ENCODE measurements at regions of chr7 and their contacts with region 1.

Region 1: DNA sequence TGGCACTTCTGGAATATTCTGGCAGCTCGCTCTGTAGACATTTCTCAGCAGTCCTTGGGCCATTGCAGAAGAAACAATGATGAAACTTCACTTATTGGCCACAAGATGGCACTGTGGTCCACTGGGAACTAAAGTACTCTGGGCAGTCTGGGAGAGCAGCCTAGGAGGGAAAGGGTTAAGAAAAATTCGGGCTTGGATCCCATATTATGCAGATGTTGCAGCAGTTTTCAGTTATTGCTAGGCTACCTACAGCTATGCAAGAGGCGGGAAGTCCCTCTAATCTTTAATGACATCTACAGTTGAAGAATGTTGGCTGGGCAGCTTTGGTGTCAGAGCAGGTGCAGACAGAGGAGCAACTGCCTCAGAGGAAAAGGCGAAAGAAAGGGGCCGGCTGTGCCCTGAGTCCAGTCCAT is 201.7 kb upstream of the PRSS58 start:
- DNase-seq: peak; percentile 59
- H3K4me3 Mint-ChIP-seq: peak overlapping the region; percentile 16
- H3K27ac Mint-ChIP-seq: peak overlapping the region; percentile 9
- H3K4me1 Mint-ChIP-seq: peaks cover 71% of the 10 kb centered on the region
- H3K27me3 Mint-ChIP-seq: no peaks in the 10 kb centered on the region

Region 2: DNA sequence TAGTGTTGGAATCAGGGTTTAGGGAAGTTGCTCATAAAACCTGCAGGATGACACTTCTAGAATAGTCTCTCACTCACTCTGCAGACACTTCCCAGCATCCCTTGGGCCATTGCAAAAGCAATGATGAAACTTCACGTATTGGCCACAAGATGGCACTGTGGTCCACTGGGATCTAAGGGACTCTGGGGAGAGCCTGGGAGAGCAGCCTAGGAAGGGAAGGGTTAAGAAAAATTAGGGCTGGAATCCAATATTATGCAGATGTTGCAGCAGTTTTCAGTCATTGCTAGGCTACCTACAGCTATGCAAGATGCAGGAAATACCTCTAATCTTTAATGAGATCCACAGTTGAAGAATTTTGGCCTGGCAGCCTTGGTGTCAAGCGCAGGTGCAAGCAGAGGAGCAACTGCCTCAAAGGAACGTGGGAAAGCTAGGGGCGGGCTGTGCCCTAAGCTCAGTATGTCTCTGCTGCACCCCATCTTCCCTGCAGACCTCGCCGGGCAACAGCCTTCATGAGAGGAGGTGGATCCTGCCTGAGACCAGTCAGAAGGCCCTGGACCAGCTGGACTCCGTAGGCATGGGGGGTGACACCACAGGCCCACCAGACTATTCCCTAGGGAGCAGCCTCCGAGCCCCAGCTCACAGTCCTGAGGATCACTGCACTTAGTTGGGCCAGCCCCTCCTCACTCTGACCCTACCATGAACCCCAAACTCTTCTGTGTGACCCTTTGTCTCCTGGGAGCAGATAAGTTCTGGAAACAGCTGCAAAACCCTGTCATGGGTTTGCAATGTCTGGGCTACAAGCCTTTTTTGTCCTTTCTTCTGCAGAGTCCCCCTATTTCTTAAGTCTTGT is 73.8 kb before region 1 on chr7:
- CTCF ChIA-PET with region 1: interaction called, 15 read pairs
- intact Hi-C with region 1: loop called (anchors 2 kb)
- DNase-seq: peak; percentile 76
- H3K4me3 Mint-ChIP-seq: peak overlapping the region; percentile 32
- H3K27ac Mint-ChIP-seq: peak overlapping the region; percentile 84
- H3K4me1 Mint-ChIP-seq: peaks cover 26% of the 10 kb centered on the region
- H3K27me3 Mint-ChIP-seq: no peaks in the 10 kb centered on the region

Region 3: GRCh38 chr7:142445019-142445686 is 14.4 kb before region 1 on chr7:
- CTCF ChIA-PET with region 1: interaction called, 18 read pairs
- intact Hi-C with region 1: no loop called
- DNase-seq: peak; percentile 72
- H3K4me3 Mint-ChIP-seq: no peak overlapping the region
- H3K27ac Mint-ChIP-seq: peak overlapping the region; percentile 70
- H3K4me1 Mint-ChIP-seq: peaks cover 33% of the 10 kb centered on the region
- H3K27me3 Mint-ChIP-seq: no peaks in the 10 kb centered on the region

Region 4: GRCh38 chr7:142496545-142497041 is 37.0 kb after region 1 on chr7:
- CTCF ChIA-PET with region 1: interaction called, 48 read pairs
- intact Hi-C with region 1: loop called (anchors 1 kb)
- DNase-seq: peak; percentile 40
- H3K4me3 Mint-ChIP-seq: peak overlapping the region; percentile 29
- H3K27ac Mint-ChIP-seq: peak overlapping the region; percentile 52
- H3K4me1 Mint-ChIP-seq: peaks cover 70% of the 10 kb centered on the region
- H3K27me3 Mint-ChIP-seq: no peaks in the 10 kb centered on the region

Region 5: GRCh38 chr7:142587578-142588191 is 128.1 kb after region 1 on chr7:
- CTCF ChIA-PET with region 1: interaction called, 3 read pairs
- intact Hi-C with region 1: loop called (anchors 1 kb)
- DNase-seq: no peak
- H3K4me3 Mint-ChIP-seq: peak overlapping the region; percentile 44
- H3K27ac Mint-ChIP-seq: peak overlapping the region; percentile 70
- H3K4me1 Mint-ChIP-seq: peaks cover 12% of the 10 kb centered on the region
- H3K27me3 Mint-ChIP-seq: no peaks in the 10 kb centered on the region

Measured in activated naive CD4-positive, alpha-beta T cell treated with anti-CD3 and anti-CD28 coated beads for 36 hours (primary cell).